CD8-positive, alpha-beta memory T cell (primary cell): ENCODE measurements at regions of chr18 and their contacts with region 1.

Region 1: DNA sequence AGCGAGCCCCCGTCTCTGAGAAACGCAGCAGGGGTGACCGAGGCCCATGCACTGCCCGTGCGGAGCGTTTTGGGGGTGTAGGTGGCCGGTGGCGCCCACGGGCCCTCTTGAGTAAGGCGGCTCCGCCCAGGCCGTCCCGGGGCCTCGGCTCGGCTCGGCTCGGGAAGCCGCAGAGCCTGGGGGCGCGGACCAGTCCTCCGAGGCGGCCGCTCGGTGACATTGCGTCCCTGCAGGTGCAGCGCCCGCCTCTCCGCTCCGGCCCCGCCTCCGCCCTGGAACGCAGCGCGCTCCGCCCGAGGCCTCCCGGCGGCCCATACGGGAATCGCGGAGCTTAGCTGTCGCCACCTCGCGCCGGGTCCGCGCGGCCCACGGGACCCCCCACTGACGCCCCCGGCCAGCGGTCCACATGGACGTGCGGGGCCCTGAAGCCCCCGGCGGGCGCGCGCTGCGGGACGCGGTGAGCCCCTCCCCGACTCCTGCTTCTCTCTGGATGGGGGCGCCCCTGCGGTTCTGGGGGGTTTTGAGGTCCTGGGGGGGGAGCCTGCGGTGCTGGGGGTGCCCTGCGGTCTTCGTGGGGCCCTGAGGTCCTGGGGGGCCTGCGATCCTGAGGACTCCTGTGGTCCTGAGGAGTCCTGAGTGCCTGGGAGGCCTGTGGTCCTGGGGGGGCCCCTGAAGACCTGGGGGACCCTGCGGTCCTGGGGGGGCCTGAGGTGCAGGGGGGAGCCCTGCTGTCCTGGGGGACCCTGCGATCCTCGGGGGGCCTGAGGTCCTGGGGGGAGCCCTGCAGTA is at the start of gene HSBP1L1:
- DNase-seq: peak; percentile 50 to 79 (median 61)
- H3K4me3 ChIP-seq: peak within 1 kb of the TSS; percentile 28
- H3K4me3 Mint-ChIP-seq: peak within 1 kb of the TSS; percentile 81 to 87 (median 85)
- H3K27ac ChIP-seq: no peak within 1 kb of the TSS
- H3K27ac Mint-ChIP-seq: peak within 1 kb of the TSS; percentile 82 to 98 (median 96)
- H3K4me1 ChIP-seq: peaks cover 34% of the 10 kb centered on the region
- H3K4me1 Mint-ChIP-seq: peaks cover 33 to 51% (median 34%) of the 10 kb centered on the region in 3 donors
- H3K27me3 ChIP-seq: no peaks in the 10 kb centered on the region
- H3K27me3 Mint-ChIP-seq: peaks cover 0 to 7% of the 10 kb centered on the region in 2 donors
- total RNA-seq, gene HSBP1L1: 3.3 to 4.2 TPM

Region 2: GRCh38 chr18:79904357-79905147 is 60.0 kb before region 1 on chr18:
- CTCF ChIA-PET with region 1: no interaction called
- POLR2A ChIA-PET with region 1: no interaction called
- DNase-seq: peak in 1 of 5 donors; percentile 39
- H3K4me3 ChIP-seq: no peak overlapping the region
- H3K4me3 Mint-ChIP-seq: no peak overlapping the region
- H3K27ac ChIP-seq: no peak overlapping the region
- H3K27ac Mint-ChIP-seq: peak overlapping the region in 1 of 8 donors; percentile 11
- H3K4me1 ChIP-seq: no peaks in the 10 kb centered on the region
- H3K4me1 Mint-ChIP-seq: peaks cover 3 to 6% (median 5%) of the 10 kb centered on the region in 3 donors
- H3K27me3 ChIP-seq: no peaks in the 10 kb centered on the region
- H3K27me3 Mint-ChIP-seq: no peaks in the 10 kb centered on the region

Region 3: DNA sequence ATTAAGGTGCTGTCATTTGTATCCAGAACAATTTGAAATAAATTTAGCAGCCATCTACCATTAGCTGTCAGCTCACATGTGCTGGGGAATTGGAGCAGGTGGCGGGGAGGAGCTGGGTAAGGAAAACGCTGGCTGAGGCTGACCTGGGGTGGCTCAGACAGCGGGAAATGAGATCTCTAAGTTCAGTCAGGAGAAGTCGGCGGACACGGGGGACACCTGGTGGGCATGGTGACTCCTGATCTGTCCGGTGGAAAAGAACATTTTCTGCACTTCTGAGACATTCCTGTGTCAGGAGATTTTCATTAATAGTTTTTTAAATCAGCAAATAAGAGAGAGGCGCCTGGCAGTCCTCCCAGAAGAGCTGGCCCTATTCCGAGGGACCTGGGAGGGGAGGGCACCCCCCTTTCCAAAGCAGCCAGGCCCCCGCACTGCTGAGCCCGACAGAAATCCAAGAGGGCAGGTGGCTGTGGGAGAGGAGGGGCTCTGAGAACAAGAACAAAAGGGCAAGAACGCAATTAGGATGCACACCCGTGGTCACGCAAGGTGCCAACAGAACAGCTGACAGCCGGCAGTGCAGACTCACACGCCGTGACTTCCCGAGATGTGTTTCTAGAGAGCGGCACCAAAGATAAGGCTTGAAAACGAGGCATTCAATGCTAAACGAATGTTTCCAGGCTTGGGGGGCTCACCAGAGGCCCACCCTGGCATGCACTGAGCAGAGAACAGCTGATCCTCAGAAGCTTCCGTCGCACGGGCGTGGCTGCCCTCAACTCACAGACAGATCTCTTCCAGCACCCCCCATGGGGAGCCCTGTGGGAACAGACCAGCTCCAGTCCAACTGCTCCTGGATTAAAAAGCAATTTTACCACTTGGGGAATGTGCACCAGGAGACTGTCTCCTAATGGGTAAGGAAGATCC is 39.5 kb before region 1 on chr18:
- CTCF ChIA-PET with region 1: no interaction called
- POLR2A ChIA-PET with region 1: no interaction called
- DNase-seq: no peak
- H3K4me3 ChIP-seq: no peak overlapping the region
- H3K4me3 Mint-ChIP-seq: peak overlapping the region in 1 of 7 donors; percentile 48
- H3K27ac ChIP-seq: no peak overlapping the region
- H3K27ac Mint-ChIP-seq: no peak overlapping the region
- H3K4me1 ChIP-seq: no peaks in the 10 kb centered on the region
- H3K4me1 Mint-ChIP-seq: peaks cover 0 to 10% (median 4%) of the 10 kb centered on the region in 3 donors
- H3K27me3 ChIP-seq: no peaks in the 10 kb centered on the region
- H3K27me3 Mint-ChIP-seq: peaks cover 0 to 2% of the 10 kb centered on the region in 2 donors

Region 4: DNA sequence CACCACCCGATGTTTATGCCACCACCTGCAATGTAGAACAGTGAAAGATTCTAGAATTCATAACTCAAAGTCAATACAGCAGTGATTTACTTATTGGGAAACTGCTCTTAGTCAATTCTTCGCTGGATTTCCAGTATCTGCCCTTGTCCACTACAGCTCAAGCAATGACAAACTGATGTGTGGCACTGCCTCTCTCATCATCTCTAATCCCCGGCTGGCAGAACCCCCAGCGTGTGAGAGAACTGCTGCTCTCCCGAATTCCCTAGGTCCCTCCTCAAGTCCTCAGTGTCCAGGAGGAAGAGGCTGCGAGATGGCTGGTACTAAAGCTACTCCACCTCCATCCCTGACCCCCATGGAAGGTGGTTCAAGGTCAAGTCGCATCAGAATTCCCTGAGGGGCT is 22.2 kb after region 1 on chr18:
- CTCF ChIA-PET with region 1: interaction called, 13 read pairs
- POLR2A ChIA-PET with region 1: interaction called, 6 read pairs
- DNase-seq: no peak
- H3K4me3 ChIP-seq: peak overlapping the region; percentile 88
- H3K4me3 Mint-ChIP-seq: peak overlapping the region; percentile 88 to 98 (median 91)
- H3K27ac ChIP-seq: no peak overlapping the region
- H3K27ac Mint-ChIP-seq: peak overlapping the region; percentile 8 to 99 (median 85)
- H3K4me1 ChIP-seq: peaks cover 56% of the 10 kb centered on the region
- H3K4me1 Mint-ChIP-seq: peaks cover 56 to 66% (median 65%) of the 10 kb centered on the region in 3 donors
- H3K27me3 ChIP-seq: no peaks in the 10 kb centered on the region
- H3K27me3 Mint-ChIP-seq: peaks cover 0 to 2% of the 10 kb centered on the region in 2 donors

Region 5: DNA sequence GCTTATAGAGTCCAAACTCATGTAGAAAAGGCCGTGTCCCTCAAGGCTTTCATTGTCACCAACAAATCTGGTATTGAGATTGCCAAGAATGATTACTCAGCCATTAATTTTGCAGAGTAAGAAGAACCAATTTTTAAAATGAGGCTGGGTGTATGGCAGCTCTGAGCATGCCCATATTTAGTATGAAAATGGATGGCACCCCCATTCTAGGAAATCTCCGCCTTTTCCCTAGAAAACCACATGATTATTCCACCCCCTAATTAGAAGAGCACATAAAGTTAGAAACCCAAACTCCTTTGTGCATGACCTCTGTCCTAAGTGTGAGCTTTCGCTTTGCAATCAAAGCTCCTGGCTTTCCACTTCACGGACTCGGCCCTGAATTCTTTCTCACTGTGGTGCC is 37.9 kb after region 1 on chr18:
- CTCF ChIA-PET with region 1: no interaction called
- POLR2A ChIA-PET with region 1: no interaction called
- DNase-seq: no peak
- H3K4me3 ChIP-seq: no peak overlapping the region
- H3K4me3 Mint-ChIP-seq: no peak overlapping the region
- H3K27ac ChIP-seq: no peak overlapping the region
- H3K27ac Mint-ChIP-seq: no peak overlapping the region
- H3K4me1 ChIP-seq: no peaks in the 10 kb centered on the region
- H3K4me1 Mint-ChIP-seq: no peaks in the 10 kb centered on the region
- H3K27me3 ChIP-seq: no peaks in the 10 kb centered on the region
- H3K27me3 Mint-ChIP-seq: peaks cover 0 to 5% of the 10 kb centered on the region in 2 donors